ENCODE measurements at regions of chr17 and their contacts with region 1.

Region 1: GRCh38 chr17:57860397-57860999 is 10.7 kb upstream of the MRPS23 start:
- DNase-seq: no peak
- ATAC-seq: peak; percentile 6
- H3K4me3 ChIP-seq: peak overlapping the region in 1 of 2 experiments; percentile 56; a peak in 1 of 4 replicates
- H3K27ac ChIP-seq: peak overlapping the region; percentile 89
- H3K4me1 ChIP-seq: peaks cover 56% of the 10 kb centered on the region
- H3K27me3 ChIP-seq: no peaks in the 10 kb centered on the region
- CTCF ChIP-seq: no peak

Region 2: GRCh38 chr17:57685505-57686132 is 174.9 kb before region 1 on chr17:
- CTCF ChIA-PET with region 1: no interaction called
- POLR2A ChIA-PET with region 1: no interaction called
- in situ Hi-C with region 1: no loop called
- intact Hi-C with region 1: no loop called
- DNase-seq: no peak
- ATAC-seq: peak; percentile 34; the same call in 1 of the 2 replicates
- H3K4me3 ChIP-seq: no peak overlapping the region
- H3K27ac ChIP-seq: no peak overlapping the region
- H3K4me1 ChIP-seq: no peaks in the 10 kb centered on the region
- H3K27me3 ChIP-seq: no peaks in the 10 kb centered on the region; the same call in 1 of the 2 replicates
- CTCF ChIP-seq: no peak

Region 3: DNA sequence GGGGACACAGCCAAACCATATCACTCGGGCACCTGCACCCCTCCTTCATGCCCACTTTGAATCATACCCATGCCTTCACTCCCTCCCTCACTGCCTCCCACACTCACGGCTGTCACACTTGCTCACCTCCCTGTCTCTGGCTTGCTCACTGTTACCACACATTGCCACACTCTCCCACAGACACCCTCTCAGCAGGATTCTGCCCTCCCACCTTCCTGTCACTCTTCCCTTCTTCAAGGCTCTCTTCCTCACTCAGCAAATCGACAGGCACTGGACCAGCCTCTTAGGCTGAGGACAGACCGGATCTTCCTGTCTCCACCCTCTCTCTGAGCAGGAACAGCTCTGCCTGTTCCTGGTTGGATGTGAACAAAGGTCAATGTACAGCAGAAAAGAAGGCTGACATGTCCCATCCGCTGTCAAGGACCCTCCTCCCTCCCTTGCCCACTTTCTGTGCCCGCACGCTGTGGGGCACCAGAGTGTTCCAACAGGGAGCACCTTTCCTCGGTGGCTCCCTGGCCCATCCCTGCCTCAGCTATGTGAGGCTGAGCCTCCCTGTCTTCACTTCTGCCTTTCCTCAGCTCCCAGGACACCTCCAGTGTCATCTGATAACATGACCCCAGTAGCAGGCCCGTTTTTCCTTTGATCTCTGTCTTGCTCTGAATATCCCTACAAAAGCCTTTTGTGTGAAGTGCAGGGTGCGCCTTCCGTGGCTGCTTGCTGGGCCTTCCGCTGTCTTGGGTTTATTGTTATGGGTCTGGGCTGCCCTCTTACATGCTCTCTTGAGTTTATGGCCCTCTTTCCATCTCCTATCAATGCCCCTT is 162.4 kb before region 1 on chr17:
- CTCF ChIA-PET with region 1: no interaction called
- POLR2A ChIA-PET with region 1: no interaction called
- in situ Hi-C with region 1: no loop called
- intact Hi-C with region 1: no loop called
- DNase-seq: no peak
- ATAC-seq: no peak
- H3K4me3 ChIP-seq: no peak overlapping the region
- H3K27ac ChIP-seq: no peak overlapping the region
- H3K4me1 ChIP-seq: no peaks in the 10 kb centered on the region
- H3K27me3 ChIP-seq: no peaks in the 10 kb centered on the region
- CTCF ChIP-seq: no peak

Region 4: GRCh38 chr17:57995076-57995956 is 134.8 kb after region 1 on chr17:
- CTCF ChIA-PET with region 1: interaction called, 9 read pairs
- POLR2A ChIA-PET with region 1: interaction called, 10 read pairs
- in situ Hi-C with region 1: loop called (anchors 5 kb)
- intact Hi-C with region 1: loop called (anchors 2 kb)
- DNase-seq: peak; percentile 52
- ATAC-seq: peak; percentile 75
- H3K4me3 ChIP-seq: no peak overlapping the region
- H3K27ac ChIP-seq: peak overlapping the region; percentile 73
- H3K4me1 ChIP-seq: peaks cover 80% of the 10 kb centered on the region
- H3K27me3 ChIP-seq: no peaks in the 10 kb centered on the region
- CTCF ChIP-seq: peak; percentile 81

Region 5: DNA sequence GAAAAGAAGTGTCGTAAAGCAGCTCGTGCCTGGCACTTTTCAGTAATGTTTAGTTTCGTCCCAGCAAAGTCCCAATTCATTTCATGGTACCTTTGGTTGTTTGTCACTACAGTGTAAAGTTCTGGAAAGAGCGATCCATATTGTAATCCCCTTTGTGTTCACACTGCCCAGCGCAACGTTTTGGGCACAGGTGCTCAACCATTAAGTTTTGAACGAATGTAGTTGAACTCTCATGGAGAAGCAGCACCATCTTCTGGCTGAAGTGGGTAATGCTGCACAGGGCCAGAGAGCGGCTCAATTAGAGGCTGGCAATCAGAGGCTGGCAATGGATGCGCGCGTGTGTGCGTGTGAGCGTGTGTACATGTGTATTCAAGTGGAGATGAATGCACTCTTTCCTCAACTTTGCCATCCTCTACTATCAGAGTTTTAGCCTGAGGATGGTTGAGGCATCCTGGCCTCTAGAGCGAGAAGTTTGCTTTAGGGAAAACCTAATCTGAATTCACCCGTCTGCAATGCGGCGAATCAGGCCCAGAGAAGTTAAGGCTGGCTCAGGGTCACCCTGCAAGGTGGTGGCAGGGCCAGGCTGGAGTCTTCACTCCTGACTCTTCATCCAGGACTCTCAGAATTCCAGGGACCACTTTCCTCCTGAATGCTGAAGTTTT is 252.6 kb after region 1 on chr17:
- CTCF ChIA-PET with region 1: interaction called, 8 read pairs
- POLR2A ChIA-PET with region 1: no interaction called
- in situ Hi-C with region 1: no loop called
- intact Hi-C with region 1: loop called (anchors 2 kb)
- DNase-seq: peak; percentile 70
- ATAC-seq: peak; percentile 88
- H3K4me3 ChIP-seq: no peak overlapping the region
- H3K27ac ChIP-seq: no peak overlapping the region
- H3K4me1 ChIP-seq: no peaks in the 10 kb centered on the region
- H3K27me3 ChIP-seq: no peaks in the 10 kb centered on the region
- CTCF ChIP-seq: peak; percentile 97

Region 6: DNA sequence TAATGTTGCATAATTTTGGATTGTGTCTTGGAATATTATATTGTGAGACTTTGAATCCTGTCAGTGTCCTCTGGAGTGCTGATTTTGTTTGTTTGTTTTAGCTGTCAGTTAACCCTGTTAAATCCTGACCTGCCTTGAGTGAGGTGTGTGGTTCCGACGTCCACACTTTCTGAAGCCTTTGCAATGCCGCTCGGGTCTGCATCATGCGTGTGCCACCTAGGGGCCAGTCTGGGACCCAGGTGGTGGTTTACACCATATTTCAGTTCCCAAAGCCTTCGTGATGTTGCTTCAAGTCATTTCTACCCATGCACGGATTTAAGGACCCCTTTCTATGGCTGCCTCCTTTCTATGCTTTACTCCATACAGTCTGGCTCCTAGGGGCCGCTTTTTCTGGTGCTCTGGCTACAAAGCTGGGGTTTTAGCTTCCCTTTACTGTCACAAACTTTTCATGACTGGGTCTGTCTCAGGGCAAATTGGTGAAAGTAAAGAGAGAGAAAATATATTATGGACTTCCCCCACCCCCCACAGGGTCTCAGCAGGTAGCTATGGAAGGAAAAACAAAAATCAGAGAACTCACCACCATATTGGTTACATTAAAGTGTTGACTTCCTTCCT is 276.3 kb after region 1 on chr17:
- CTCF ChIA-PET with region 1: no interaction called
- POLR2A ChIA-PET with region 1: interaction called, 11 read pairs
- in situ Hi-C with region 1: no loop called
- intact Hi-C with region 1: no loop called
- DNase-seq: no peak
- ATAC-seq: peak; percentile 95
- H3K4me3 ChIP-seq: no peak overlapping the region
- H3K27ac ChIP-seq: no peak overlapping the region
- H3K4me1 ChIP-seq: no peaks in the 10 kb centered on the region
- H3K27me3 ChIP-seq: peaks cover 42% of the 10 kb centered on the region
- CTCF ChIP-seq: peak; percentile 82

Measured in Panc1 (cell line).